Activated CD4-positive, alpha-beta T cell treated with anti-CD3 and anti-CD28 coated beads, Interleukin-2, amount 10 ng/mL, durations not matched to agents 24 days and 14 days (primary cell): ENCODE measurements at regions of chr9 and their contacts with region 1.

Region 1: DNA sequence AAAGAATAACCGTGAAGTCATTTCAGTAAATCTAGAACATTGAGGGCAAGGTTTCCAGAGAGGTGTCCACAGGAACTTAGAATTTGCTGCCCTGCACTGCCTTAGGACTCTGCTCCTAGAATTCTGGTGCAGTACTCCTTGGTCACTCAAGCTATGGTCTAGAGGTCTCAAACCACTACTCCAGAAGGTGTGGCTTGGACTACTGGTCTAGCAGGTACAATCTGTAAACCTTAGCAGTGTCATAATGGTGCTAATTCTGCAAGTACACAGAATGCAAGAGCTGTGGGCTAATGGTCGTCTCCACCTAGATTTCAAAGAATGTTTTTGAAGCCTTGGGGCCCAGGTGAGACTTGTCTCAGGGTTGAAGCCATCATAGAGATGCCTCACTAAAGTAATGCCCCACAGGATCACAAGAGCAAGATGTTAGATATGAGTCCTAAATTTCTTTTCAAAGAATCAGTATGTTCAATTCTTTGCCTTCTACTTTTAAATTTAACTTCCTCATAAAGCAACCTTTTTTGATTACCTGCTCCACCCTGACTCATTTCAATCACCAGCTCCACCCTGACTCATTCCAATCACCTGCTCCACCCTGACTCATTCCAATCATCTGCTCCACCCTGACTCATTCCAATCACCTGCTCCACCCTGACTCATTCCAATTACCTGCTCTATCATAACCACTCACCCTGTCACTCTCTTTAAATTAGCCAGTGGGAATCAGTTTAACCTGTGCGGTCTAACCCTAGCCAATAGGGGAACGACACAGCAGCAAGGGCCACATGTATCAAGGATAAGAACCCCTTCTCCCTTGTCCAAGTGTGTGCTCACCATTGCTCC is 1111.8 kb upstream of the ACO1 start:
- DNase-seq: no peak
- H3K4me3 Mint-ChIP-seq: no peak overlapping the region
- H3K27ac Mint-ChIP-seq: no peak overlapping the region
- H3K4me1 Mint-ChIP-seq: peaks cover 4% of the 10 kb centered on the region
- H3K27me3 Mint-ChIP-seq: no peaks in the 10 kb centered on the region

Region 2: GRCh38 chr9:31259824-31260223 is 12.9 kb before region 1 on chr9:
- intact Hi-C with region 1: loop called (anchors 1 kb)
- DNase-seq: peak; percentile 61
- H3K4me3 Mint-ChIP-seq: no peak overlapping the region
- H3K27ac Mint-ChIP-seq: no peak overlapping the region
- H3K4me1 Mint-ChIP-seq: peaks cover 3% of the 10 kb centered on the region
- H3K27me3 Mint-ChIP-seq: no peaks in the 10 kb centered on the region